Heart left ventricle (tissue), 16 donors: ENCODE measurements at regions of chr15 and their contacts with region 1.

Region 1: DNA sequence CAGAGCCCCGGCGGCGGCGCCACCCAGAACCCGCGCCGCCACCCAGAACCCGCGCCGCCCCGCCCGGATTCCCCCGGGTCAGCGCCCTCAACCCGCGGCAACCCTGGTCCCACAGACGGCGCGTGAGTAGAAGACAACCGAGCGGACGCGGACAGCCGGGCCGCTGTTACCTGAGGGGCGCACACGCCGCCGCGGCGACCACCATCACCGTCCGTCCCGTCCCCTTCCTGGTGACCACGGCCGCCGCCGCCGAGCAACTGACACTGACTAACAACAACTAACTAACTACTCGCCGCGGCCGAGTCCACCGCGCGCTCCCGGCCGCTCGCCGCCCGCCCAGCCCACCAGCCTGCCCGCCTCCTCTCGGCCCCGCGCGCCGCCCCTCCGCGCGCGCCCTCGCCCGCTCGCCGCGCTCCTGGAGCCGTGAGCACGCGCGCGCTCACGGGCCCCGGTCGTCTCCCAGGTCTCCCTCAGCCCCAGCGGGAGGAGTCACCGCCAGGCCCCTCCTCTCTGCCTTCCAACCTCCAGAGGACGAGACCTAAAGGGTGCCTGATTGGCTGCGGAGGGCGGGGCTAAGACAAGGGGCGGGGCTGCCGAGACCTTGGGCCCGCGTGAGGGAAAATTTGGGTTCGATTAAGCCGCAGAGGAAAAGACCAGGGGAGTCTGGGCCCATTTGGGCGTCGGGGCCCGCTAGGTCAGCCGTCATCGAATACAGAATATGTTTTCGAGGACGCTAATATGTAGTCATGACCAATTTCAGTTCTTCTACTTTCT is at the start of gene PEAK1:
- DNase-seq: peak; percentile 100
- ATAC-seq: peak; percentile 97 to 99 (median 99)
- H3K4me3 ChIP-seq: peak within 1 kb of the TSS; percentile 67 to 95 (median 92)
- H3K27ac ChIP-seq: peak within 1 kb of the TSS; percentile 82 to 98 (median 96)
- H3K4me1 ChIP-seq: peaks cover 6 to 73% (median 57%) of the 10 kb centered on the region in 12 donors
- H3K27me3 ChIP-seq: no peaks in the 10 kb centered on the region
- CTCF ChIP-seq: no peak
- POLR2A ChIP-seq: peak; percentile 4 to 93
- total RNA-seq, gene PEAK1: 52.8 to 139 (median 104) TPM

Region 2: GRCh38 chr15:77053709-77054108 is 366.3 kb before region 1 on chr15:
- intact Hi-C with region 1: no loop called
- DNase-seq: no peak
- ATAC-seq: no peak
- H3K4me3 ChIP-seq: no peak overlapping the region
- H3K27ac ChIP-seq: no peak overlapping the region
- H3K4me1 ChIP-seq: peaks cover 0 to 8% (median 0%) of the 10 kb centered on the region in 12 donors
- H3K27me3 ChIP-seq: no peaks in the 10 kb centered on the region
- CTCF ChIP-seq: no peak
- POLR2A ChIP-seq: no peak

Region 3: DNA sequence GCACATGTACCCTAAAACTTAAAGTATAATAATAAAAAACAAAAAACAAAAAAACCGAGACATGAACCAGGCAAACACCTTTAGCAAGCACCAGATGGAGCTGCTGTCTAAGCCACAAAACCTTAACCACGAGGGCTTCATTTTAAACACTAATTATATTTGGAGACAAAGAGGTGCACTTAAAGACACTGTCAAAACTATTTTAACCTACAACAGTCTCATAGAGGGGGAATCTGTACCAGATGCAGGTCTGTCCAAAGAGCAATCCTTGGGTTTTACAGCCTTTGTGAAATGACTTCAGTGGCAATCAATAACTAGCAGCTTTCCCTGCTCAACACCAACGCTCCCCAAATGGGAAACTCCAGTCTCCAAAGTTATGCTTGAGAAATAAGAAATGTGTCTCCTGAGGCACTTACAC is 233.4 kb before region 1 on chr15:
- intact Hi-C with region 1: loop called in 7 of 10 experiments (anchors 1 to 5 kb)
- DNase-seq: no peak
- ATAC-seq: peak in 3 of 4 donors; percentile 24 to 53 (median 33)
- H3K4me3 ChIP-seq: no peak overlapping the region
- H3K27ac ChIP-seq: peak overlapping the region; percentile 42 to 93 (median 86)
- H3K4me1 ChIP-seq: peaks cover 3 to 66% (median 49%) of the 10 kb centered on the region in 12 donors
- H3K27me3 ChIP-seq: no peaks in the 10 kb centered on the region
- CTCF ChIP-seq: peak; percentile 40 to 76 (median 64)
- POLR2A ChIP-seq: no peak

Region 4: DNA sequence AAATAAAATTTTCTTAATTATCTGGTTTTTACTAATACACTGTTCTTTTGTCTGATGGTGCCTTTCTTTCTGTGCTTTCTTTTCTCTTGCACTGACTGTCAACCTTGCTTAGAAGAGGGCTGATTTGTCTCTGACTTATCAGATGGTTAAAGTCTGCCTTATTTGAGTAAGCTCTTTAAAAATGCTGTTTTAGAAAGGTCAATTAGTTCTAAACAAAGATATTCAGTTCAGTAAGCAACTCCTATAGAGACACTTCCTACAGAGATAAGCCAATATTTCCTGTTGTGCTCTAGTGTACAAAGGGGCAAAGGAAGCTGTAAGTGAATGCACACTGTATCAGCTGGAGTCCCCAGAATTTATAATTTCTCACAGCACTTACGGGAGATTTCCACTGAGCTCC is 195.7 kb before region 1 on chr15:
- intact Hi-C with region 1: loop called in 1 of 10 experiments (anchors 10 kb)
- DNase-seq: no peak
- ATAC-seq: peak in 1 of 4 donors; percentile 69
- H3K4me3 ChIP-seq: no peak overlapping the region
- H3K27ac ChIP-seq: peak overlapping the region in 6 of 12 donors; percentile 0 to 21 (median 11)
- H3K4me1 ChIP-seq: peaks cover 0 to 51% (median 18%) of the 10 kb centered on the region in 12 donors
- H3K27me3 ChIP-seq: no peaks in the 10 kb centered on the region
- CTCF ChIP-seq: no peak
- POLR2A ChIP-seq: no peak

Region 5: GRCh38 chr15:77440378-77440999 is 20.5 kb after region 1 on chr15:
- intact Hi-C with region 1: no loop called
- DNase-seq: no peak
- ATAC-seq: peak in 1 of 4 donors; percentile 18
- H3K4me3 ChIP-seq: no peak overlapping the region
- H3K27ac ChIP-seq: no peak overlapping the region
- H3K4me1 ChIP-seq: peaks cover 0 to 48% (median 37%) of the 10 kb centered on the region in 12 donors
- H3K27me3 ChIP-seq: no peaks in the 10 kb centered on the region
- CTCF ChIP-seq: no peak
- POLR2A ChIP-seq: no peak

Region 6: DNA sequence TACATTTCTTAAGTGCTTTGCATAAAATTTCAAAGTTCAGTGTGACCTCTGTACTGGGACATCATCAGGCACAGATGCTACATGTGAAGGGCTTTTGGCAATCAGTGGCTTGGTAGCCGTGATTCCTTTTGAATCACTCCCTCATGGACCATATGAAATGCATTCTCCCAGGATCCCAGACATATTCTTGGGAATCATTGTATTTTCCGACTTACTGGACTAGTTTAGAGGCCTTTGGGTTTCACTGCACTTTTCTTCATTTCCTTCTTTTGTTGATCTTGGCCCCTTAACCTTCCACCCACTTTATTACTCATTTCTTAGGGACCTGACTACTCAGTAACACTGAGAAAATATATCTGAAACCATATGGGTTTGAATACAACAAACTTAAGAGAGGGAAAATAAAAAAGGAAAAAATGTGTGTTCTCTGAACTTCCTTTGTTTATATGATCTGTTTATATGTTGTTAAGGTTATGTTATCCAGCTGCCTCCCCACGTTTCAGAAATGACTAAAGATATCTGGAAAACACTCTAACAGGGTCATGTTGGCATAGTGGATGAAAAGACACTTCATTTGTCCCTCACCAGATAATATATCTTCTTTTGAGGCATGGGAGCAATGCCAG is 35.8 kb after region 1 on chr15:
- intact Hi-C with region 1: loop called in 3 of 10 experiments (anchors 5 kb)
- DNase-seq: peak in 3 of 5 donors; percentile 28 to 42 (median 28)
- ATAC-seq: peak; percentile 61 to 87 (median 82)
- H3K4me3 ChIP-seq: no peak overlapping the region
- H3K27ac ChIP-seq: peak overlapping the region; percentile 25 to 79 (median 62)
- H3K4me1 ChIP-seq: peaks cover 3 to 58% (median 42%) of the 10 kb centered on the region in 12 donors
- H3K27me3 ChIP-seq: no peaks in the 10 kb centered on the region
- CTCF ChIP-seq: no peak
- POLR2A ChIP-seq: no peak

Region 7: DNA sequence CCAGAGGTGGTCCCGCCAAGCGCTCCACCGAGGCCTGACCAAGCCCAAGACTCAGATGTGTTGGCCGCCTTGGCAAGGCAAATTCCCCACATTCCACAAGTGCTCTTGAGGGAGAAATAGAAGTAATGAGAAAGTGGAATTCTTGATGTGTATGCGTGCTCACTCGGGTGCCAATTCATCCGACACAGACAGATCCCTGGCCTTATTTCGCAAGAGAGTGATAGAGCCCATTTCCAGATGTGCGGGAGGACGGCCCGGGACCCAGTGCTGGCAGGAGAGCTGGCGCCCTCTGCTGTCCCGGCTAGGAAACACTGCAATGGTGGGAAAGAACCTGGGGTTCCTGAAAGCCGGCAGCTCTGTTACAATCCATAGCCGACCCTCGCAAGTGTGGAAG is 76.7 kb after region 1 on chr15:
- intact Hi-C with region 1: loop called (anchors 1 to 5 kb)
- DNase-seq: peak; percentile 88 to 92 (median 90)
- ATAC-seq: peak; percentile 77 to 85 (median 82)
- H3K4me3 ChIP-seq: peak overlapping the region in 9 of 12 donors; percentile 8 to 39 (median 22)
- H3K27ac ChIP-seq: peak overlapping the region; percentile 53 to 96 (median 90)
- H3K4me1 ChIP-seq: peaks cover 3 to 85% (median 67%) of the 10 kb centered on the region in 12 donors
- H3K27me3 ChIP-seq: no peaks in the 10 kb centered on the region
- CTCF ChIP-seq: peak; percentile 92 to 98 (median 96)
- POLR2A ChIP-seq: no peak